ENCODE measurements at regions of chr12 and their contacts with region 1.

Region 1: GRCh38 chr12:123365025-123365917 is 624 bp upstream of the SBNO1 start:
- H3K4me3 ChIP-seq: peak overlapping the region; percentile 82
- H3K27ac ChIP-seq: peak overlapping the region; percentile 80
- H3K4me1 ChIP-seq: peaks cover 5% of the 10 kb centered on the region; the same call in 1 of the 2 replicates
- CTCF ChIP-seq: peak; percentile 81

Region 2: DNA sequence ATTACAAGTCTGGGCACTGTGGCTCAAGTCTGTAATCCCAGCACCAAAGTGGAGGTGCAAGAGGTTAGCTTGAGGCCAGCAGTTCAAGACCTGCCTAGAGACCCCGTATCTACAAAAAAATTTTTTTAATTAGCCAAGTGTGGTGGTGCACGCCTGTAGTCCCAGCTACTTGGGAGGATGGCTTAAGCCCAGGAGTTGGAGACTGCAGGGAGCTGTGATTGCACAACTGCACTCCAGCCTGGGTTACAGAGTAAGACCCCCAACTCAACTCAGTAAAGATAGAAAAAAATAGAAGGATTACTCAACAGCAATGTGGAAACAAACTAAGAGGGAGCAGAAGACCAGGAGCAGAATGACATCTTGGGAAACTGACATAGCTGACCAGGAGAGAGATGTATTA is 13.9 kb before region 1 on chr12:
- CTCF ChIA-PET with region 1: interaction called, 10 read pairs
- POLR2A ChIA-PET with region 1: interaction called, 7 read pairs
- H3K4me3 ChIP-seq: no peak overlapping the region
- H3K27ac ChIP-seq: no peak overlapping the region
- H3K4me1 ChIP-seq: no peaks in the 10 kb centered on the region
- CTCF ChIP-seq: no peak

Region 3: GRCh38 chr12:123382684-123383083 is 17.4 kb after region 1 on chr12:
- CTCF ChIA-PET with region 1: interaction called, 11 read pairs
- POLR2A ChIA-PET with region 1: interaction called, 81 read pairs
- H3K4me3 ChIP-seq: no peak overlapping the region
- H3K27ac ChIP-seq: no peak overlapping the region
- H3K4me1 ChIP-seq: no peaks in the 10 kb centered on the region
- CTCF ChIP-seq: no peak

Region 4: GRCh38 chr12:123388177-123388947 is 23.1 kb after region 1 on chr12:
- CTCF ChIA-PET with region 1: interaction called, 10 read pairs
- POLR2A ChIA-PET with region 1: interaction called, 81 read pairs
- H3K4me3 ChIP-seq: peak overlapping the region; percentile 52
- H3K27ac ChIP-seq: no peak overlapping the region; the same call in 1 of the 2 replicates
- H3K4me1 ChIP-seq: peaks cover 2% of the 10 kb centered on the region; the same call in 1 of the 2 replicates
- CTCF ChIP-seq: no peak

Region 5: GRCh38 chr12:123457980-123458783 is 92.9 kb after region 1 on chr12 and contains the start of gene SNRNP35:
- CTCF ChIA-PET with region 1: no interaction called
- POLR2A ChIA-PET with region 1: interaction called, 11 read pairs
- H3K4me3 ChIP-seq: peak within 1 kb of the TSS; percentile 60
- H3K27ac ChIP-seq: peak within 1 kb of the TSS; percentile 97
- H3K4me1 ChIP-seq: no peaks in the 10 kb centered on the region
- CTCF ChIP-seq: no peak